ENCODE measurements at regions of chr10 and their contacts with region 1.

Region 1: GRCh38 chr10:5896208-5897052 is 6.4 kb downstream of the FBH1 start:
- DNase-seq: no peak
- ATAC-seq: no peak
- H3K4me3 ChIP-seq: no peak overlapping the region
- H3K27ac ChIP-seq: no peak overlapping the region
- H3K4me1 ChIP-seq: no peaks in the 10 kb centered on the region
- H3K27me3 ChIP-seq: no peaks in the 10 kb centered on the region
- CTCF ChIP-seq: no peak

Region 2: DNA sequence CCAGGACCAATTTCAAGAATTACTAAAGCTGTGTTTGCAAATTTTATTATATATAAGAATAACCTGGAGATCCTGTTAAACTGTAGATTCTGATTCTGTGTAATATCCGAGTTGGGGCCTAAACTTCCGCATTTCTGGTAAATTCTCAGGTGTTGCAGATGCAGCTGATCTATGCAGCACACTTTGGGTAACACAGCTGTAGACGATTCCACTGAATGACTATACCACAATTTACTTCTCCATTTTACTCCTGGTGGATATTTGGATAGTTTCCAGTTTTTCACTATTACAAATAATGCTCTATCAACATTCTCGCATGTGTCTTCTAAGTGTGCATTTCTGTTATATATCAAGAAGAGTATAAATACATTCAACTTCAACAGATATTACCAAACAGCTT is 90.7 kb before region 1 on chr10:
- CTCF ChIA-PET with region 1: interaction called, 10 read pairs
- POLR2A ChIA-PET with region 1: no interaction called
- in situ Hi-C with region 1: no loop called
- intact Hi-C with region 1: no loop called
- DNase-seq: no peak
- ATAC-seq: no peak
- H3K4me3 ChIP-seq: no peak overlapping the region
- H3K27ac ChIP-seq: no peak overlapping the region
- H3K4me1 ChIP-seq: peaks cover 15% of the 10 kb centered on the region; the same call in 1 of the 2 replicates
- H3K27me3 ChIP-seq: no peaks in the 10 kb centered on the region
- CTCF ChIP-seq: no peak

Region 3: DNA sequence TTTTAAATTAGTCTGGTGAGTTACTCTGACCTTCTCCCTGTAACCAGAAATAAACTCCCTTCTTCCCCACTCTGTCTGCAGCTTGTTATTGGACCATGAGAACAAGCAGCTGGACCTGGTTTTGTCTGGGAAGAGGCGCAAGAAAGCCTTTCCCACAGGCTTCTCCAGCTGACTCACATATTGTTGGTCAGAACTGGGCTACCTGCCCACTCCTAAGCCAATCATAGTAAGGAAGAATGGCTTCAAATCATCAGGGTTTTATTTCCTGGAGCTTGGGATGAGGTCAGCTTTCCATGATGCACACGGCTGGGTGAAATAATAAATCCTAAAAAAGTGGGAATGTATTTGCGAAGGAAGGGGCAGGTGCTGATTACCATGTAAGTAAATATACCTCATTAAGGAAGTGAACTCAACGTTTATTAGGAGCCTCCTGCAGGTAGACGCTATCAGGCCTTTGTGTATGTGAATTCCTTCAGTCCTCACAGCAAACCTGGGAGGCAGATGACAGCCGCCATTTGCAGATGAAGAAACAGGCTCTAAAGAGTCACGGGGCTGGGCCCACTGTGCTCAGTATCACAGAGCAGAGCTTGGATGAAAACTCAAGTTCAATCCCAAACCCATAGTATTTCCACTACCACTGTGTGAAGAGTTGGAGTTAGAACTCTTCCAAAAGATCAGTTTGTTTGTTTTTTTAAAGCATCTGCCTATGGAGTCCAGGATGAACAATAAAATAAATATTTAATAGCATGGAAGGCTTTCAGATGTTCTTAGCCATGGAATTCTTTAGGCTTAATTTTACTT is 48.2 kb after region 1 on chr10:
- CTCF ChIA-PET with region 1: no interaction called
- POLR2A ChIA-PET with region 1: no interaction called
- in situ Hi-C with region 1: no loop called
- intact Hi-C with region 1: no loop called
- DNase-seq: peak; percentile 53
- ATAC-seq: no peak
- H3K4me3 ChIP-seq: no peak overlapping the region
- H3K27ac ChIP-seq: no peak overlapping the region
- H3K4me1 ChIP-seq: no peaks in the 10 kb centered on the region
- H3K27me3 ChIP-seq: no peaks in the 10 kb centered on the region
- CTCF ChIP-seq: no peak